K562 (cell line): ENCODE measurements at regions of chr19 and their contacts with region 1.

Region 1: DNA sequence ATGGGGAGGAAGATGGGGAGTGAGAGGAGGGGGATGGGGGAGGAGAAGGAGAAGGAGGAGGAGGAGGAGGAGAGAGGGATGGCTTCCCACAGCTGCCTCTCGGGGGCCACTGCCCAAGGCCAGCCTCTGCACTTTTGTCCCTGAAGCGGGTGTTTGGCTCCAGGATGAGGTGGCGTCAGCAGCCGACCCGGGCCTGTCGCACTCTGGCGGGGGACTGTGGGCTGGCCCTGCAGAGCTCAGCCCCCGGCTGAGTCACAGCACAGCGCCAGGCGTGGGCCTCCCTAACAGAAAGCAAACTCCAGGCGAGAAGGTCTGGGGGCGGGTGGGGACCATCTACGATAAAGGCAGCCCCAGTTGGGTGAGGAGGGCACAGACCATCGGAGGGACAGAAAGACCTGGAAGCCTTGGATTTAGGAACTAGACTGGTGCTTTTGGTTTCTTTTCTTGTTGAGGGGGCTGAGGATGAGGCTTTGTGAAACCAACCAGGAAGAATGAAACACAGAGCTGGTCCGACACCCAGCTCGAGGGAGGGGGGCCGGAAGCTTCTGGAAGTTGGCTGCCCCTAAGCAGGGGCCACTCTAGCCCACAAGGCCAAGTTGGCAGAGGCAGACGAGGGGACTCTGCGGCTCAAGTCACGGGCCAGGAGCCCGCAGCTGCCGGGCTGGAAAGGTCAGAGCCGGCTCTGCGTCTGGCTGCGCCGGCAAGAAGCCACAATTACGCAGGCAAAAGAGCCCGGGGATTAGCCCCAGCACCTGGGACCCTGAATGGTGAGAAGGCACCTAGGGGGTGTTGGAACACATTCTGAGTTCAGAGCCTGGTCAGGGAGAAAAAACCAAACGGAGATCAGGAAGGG is 18.2 kb downstream of the LSM4 start:
- DNase-seq: peak; percentile 87 to 93 (median 90)
- ATAC-seq: peak; percentile 95
- H3K4me3 ChIP-seq: peak overlapping the region; percentile 28
- H3K27ac ChIP-seq: peak overlapping the region; percentile 81
- H3K4me1 ChIP-seq: peaks cover 30 to 76% of the 10 kb centered on the region in 2 experiments
- H3K27me3 ChIP-seq: no peaks in the 10 kb centered on the region
- CTCF ChIP-seq: peak in 2 of 3 experiments; percentile 16 to 19; a peak in 2 of 6 replicates
- EP300 ChIP-seq: no peak
- POLR2A ChIP-seq: peak; percentile 83; the same call in 1 of the 2 replicates
- RAD21 ChIP-seq: peak in 1 of 2 experiments; percentile 44; a peak in 3 of 4 replicates

Region 2: GRCh38 chr19:18291590-18292461 is 12.9 kb before region 1 on chr19:
- CTCF ChIA-PET with region 1: no interaction called
- POLR2A ChIA-PET with region 1: interaction called, 20 read pairs
- in situ Hi-C with region 1: no loop called
- intact Hi-C with region 1: no loop called
- DNase-seq: peak; percentile 88 to 97 (median 92)
- ATAC-seq: peak; percentile 81
- H3K4me3 ChIP-seq: peak overlapping the region; percentile 64
- H3K27ac ChIP-seq: peak overlapping the region; percentile 98
- H3K4me1 ChIP-seq: peaks cover 31 to 64% of the 10 kb centered on the region in 2 experiments
- H3K27me3 ChIP-seq: no peaks in the 10 kb centered on the region
- CTCF ChIP-seq: no peak
- EP300 ChIP-seq: no peak
- POLR2A ChIP-seq: peak; percentile 79
- RAD21 ChIP-seq: peak in 1 of 2 experiments; percentile 4; a peak in 2 of 4 replicates